HAP-1 (cell line): ENCODE measurements at regions of chr11 and their contacts with region 1.

Region 1: GRCh38 chr11:21511835-21512440 is 680.9 kb upstream of the ANO5 start:
- DNase-seq: peak; percentile 84 to 92
- H3K4me3 ChIP-seq: no peak overlapping the region
- H3K4me1 ChIP-seq: peaks cover 2% of the 10 kb centered on the region; the same call in 1 of the 2 replicates
- H3K27me3 ChIP-seq: no peaks in the 10 kb centered on the region

Region 2: DNA sequence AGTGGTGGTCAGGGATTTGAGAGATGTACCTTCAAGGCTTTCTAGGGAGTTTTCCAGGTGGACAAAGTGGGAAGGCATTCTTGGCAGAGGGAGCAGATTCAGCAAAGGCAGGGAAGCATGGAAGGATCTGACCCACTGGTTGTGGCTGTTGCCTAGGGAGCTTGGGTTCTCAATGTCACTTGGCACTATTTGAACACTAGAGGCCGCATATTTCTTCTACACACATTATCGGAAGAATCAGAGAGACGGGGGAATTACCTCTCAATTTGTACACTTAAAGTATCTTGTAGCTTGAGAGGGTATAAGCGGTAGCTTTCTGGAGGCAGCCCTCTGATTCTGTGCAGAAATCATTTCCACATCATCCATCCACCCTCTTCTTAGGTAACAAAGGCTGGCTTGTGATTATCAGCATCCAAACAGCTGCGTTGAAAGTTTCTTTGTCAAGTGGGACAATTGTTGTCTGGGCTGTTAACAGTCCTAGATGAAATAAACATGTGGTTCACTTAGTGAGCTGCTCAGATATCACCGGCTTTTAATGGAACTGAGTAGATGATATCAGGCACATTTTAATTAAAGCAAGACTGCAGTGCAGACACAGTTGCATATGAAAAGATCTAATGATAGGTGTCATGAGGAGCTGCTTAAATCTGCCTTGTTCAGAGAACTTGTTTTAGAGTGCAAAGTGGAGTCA is 839.9 kb before region 1 on chr11:
- in situ Hi-C with region 1: loop called (anchors 25 kb)
- DNase-seq: peak; percentile 61 to 77
- H3K4me3 ChIP-seq: no peak overlapping the region; the same call in 1 of the 2 replicates
- H3K4me1 ChIP-seq: peaks cover 21% of the 10 kb centered on the region
- H3K27me3 ChIP-seq: peaks cover 25% of the 10 kb centered on the region; the same call in 1 of the 2 replicates

Region 3: GRCh38 chr11:21615955-21616371 is 104.0 kb after region 1 on chr11:
- in situ Hi-C with region 1: no loop called
- DNase-seq: no peak
- H3K4me3 ChIP-seq: no peak overlapping the region
- H3K4me1 ChIP-seq: no peaks in the 10 kb centered on the region
- H3K27me3 ChIP-seq: no peaks in the 10 kb centered on the region

Region 4: DNA sequence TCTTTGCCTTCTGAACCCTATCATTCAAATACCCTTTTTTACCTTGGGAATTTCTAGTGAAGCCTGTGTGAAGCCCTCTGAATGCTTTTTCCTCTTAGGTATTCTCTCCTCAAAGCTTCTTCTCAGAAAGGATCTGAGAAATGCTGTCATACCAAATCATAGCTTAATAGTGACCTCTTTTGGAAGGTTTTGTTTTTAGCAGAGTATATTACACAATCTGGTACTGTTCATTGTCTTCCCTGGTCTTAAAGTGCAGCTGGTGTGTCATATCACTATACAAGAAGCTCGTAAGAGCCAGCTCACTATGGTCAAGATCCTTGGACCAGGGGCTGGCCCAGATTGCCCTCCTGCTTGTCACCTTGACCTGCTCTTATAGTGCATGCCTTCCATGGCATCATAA is 476.5 kb after region 1 on chr11:
- in situ Hi-C with region 1: no loop called
- DNase-seq: no peak
- H3K4me3 ChIP-seq: no peak overlapping the region
- H3K4me1 ChIP-seq: no peaks in the 10 kb centered on the region
- H3K27me3 ChIP-seq: 0 out of 2 replicates have a peak, but pooled peaks cover 2% of the 10 kb centered on the region